Spleen (tissue), 13 donors: ENCODE measurements at regions of chr9 and their contacts with region 1.

Region 1: DNA sequence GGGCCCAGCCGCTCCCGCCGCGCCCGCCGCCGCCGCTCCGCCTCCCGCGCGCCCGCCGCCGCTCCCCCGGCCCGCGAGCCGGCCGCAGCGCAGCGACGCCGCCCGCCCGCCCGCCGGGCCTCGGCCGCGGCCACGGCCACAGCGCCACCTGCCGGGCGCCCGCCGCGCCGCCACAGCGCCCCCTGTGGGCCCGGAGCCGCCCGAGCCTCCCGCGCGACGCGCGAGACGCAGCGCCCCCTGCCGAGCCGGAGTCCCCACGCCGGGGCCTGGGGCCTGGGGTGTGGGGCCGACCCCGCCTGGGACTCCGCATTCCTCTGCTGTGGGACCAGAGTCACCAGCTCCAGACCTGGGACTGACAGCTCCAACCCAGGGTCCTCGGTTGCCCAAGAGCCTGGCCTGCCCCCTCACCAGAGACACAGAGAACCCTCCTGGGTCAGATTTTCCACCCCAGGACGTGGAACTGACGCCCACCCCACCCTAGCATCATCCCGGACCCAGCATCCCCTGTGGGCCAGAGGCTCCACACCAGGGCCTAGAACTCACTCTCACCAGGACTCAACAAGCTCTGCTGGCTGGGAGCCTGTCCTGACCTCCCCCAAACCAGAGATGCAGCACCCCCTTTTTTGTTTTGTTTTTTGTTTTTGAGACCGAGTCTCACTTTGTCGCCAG is at the start of gene RAPGEF1:
- DNase-seq: peak; percentile 97
- H3K4me3 ChIP-seq: peak within 1 kb of the TSS; percentile 44 to 84 (median 58)
- H3K27ac ChIP-seq: peak within 1 kb of the TSS; percentile 78 to 98 (median 90)
- H3K4me1 ChIP-seq: peaks cover 30 to 72% (median 55%) of the 10 kb centered on the region in 6 donors
- H3K27me3 ChIP-seq: no peaks in the 10 kb centered on the region
- CTCF ChIP-seq: peak; percentile 52 to 96 (median 91)
- POLR2A ChIP-seq: no peak
- total RNA-seq, gene RAPGEF1: 88.1 to 137 (median 118) TPM

Region 2: GRCh38 chr9:131678499-131679111 is 61.5 kb before region 1 on chr9:
- intact Hi-C with region 1: loop called (anchors 10 kb)
- DNase-seq: peak; percentile 91
- H3K4me3 ChIP-seq: no peak overlapping the region
- H3K27ac ChIP-seq: peak overlapping the region; percentile 62 to 95 (median 86)
- H3K4me1 ChIP-seq: peaks cover 49 to 96% (median 86%) of the 10 kb centered on the region in 6 donors
- H3K27me3 ChIP-seq: no peaks in the 10 kb centered on the region
- CTCF ChIP-seq: peak in 1 of 11 experiments; percentile 7
- POLR2A ChIP-seq: peak in 2 of 3 donors; percentile 37 to 47

Region 3: DNA sequence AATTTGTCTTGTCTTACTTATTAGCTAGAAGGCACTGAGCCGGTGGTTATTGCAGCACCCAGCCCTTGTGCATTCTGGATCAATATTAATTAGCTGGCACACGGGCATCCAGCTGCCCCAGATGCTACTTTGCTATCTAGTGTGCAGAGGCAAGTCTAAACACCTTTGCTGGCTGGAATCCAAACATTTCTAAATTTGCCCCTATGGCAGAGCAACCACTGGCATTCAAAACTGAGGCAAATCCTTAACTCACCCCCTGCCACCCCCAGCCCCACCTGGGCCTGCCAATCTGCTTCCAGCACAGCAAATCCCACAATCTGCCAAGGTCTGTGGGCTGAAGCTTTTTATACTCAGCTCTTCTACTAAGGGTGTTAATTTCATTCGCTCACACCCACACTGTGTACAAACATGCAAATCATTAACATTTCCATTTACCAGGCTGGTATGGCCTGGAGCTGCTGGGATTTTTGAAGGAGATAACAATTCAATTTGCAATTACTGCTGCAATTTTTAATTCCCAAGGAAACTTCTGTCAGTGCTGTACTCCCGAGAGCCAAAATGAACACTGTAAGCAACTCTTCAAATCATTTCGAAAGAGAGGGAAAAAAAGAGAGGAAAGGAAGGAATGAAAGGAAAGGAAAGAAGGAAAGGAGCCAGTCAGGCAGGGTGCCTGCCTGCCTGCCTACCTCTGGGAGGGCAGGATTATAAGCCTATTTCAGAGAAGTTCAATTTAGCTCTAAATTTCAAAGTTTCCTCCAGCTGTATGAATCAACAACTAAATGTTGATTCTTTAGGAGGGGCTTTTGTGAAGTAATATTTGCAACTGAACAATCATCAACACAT is 35.8 kb before region 1 on chr9:
- intact Hi-C with region 1: loop called (anchors 5 kb)
- DNase-seq: no peak
- H3K4me3 ChIP-seq: no peak overlapping the region
- H3K27ac ChIP-seq: peak overlapping the region in 3 of 8 donors; percentile 9 to 80 (median 80)
- H3K4me1 ChIP-seq: peaks cover 35 to 100% (median 93%) of the 10 kb centered on the region in 6 donors
- H3K27me3 ChIP-seq: no peaks in the 10 kb centered on the region
- CTCF ChIP-seq: no peak
- POLR2A ChIP-seq: no peak